Mammary epithelial cell (primary cell): ENCODE measurements at regions of chr10 and their contacts with region 1.

Region 1: DNA sequence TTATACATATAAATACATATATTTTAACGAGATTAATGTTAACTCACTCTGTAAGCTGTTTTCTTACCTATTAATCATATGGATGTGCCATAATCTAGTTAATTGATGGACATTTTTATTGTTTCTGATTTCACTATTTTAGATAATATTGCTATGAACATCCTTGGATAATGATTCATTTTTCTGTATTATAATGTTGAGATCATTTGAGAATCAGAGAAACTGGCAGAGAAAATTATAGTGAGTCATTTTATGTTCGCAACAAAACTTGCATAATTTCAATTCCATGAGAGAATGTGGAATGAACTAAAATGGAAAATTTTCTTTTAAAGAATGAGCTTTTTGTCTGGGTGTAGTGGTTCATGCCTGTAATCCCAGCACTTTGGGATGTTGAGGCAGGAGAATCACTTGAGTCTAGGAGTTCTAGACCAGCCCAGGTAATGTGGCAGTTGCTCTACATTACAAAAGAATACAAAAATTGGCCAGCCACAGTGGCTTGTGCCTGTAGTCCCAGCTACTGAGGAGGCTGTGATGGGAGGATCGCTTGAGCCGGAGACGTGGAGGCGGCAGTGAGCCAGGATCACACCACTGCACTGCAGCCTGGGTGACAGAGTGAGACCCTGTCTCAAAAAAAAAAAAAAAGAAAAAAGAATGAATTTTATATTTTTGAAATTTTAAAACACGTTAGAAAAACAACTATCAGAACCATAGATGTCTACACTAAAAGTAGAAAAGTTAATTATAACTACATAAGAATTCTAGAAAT is 40.5 kb downstream of the PAPSS2 start:
- DNase-seq: peak; percentile 52
- H3K4me3 ChIP-seq: no peak overlapping the region
- H3K27ac ChIP-seq: no peak overlapping the region
- H3K4me1 ChIP-seq: no peaks in the 10 kb centered on the region
- H3K27me3 ChIP-seq: no peaks in the 10 kb centered on the region
- CTCF ChIP-seq: no peak

Region 2: GRCh38 chr10:87626422-87626892 is 73.8 kb before region 1 on chr10:
- CTCF ChIA-PET with region 1: no interaction called
- dilution Hi-C with region 1: loop called (anchors 5 kb)
- in situ Hi-C with region 1: no loop called
- intact Hi-C with region 1: no loop called
- DNase-seq: no peak
- H3K4me3 ChIP-seq: no peak overlapping the region
- H3K27ac ChIP-seq: no peak overlapping the region
- H3K4me1 ChIP-seq: no peaks in the 10 kb centered on the region
- H3K27me3 ChIP-seq: no peaks in the 10 kb centered on the region
- CTCF ChIP-seq: no peak